ENCODE measurements at regions of chr21 and their contacts with region 1.

Region 1: DNA sequence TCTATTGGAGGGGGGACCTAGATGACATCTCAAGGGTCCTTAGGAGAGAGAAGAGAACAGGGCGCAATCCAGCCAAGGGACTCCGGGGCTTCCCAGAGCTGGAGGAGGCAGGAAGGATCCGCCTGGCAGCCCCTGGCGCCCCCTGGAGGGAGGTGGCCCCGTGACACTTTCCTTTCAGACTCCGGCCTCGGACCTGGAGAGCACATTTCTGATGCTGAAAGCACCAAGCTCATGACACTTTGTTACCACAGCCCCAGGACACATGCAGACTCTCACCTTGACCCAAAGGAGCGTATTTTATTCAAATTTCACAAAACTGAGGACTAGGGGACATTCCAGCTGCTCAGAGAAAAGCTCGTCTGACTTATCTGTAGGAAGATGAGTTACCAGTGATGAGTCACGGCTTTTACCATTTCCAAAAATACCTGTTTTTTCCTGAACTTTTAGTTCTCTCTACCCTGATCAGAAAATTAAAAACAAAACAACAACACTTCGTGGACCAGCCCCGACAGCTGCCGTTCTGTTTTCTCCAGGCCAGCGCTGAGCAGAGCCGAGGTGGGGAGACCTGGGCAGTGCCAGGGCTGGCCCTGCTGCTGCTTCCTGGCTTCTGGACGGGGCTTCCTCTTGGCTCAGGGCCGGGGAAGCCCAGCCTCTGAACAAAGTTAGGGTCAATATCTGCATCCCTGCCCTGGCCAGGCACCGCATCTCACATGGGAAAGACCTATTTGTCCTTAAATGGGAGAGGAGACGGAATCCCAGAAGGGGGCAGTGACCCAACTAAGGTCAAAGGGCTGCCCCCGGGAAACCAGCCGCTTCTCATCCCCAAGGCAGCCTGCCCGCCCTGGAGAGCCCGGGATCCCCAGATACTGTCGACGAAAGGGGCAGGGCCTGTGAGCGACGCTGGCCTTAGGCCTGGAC is 21.6 kb upstream of the POFUT2 start:
- DNase-seq: peak; percentile 78 to 89 (median 83)
- H3K4me3 ChIP-seq: no peak overlapping the region
- H3K27ac ChIP-seq: peak overlapping the region; percentile 7 to 84
- H3K4me1 ChIP-seq: peaks cover 39% of the 10 kb centered on the region
- H3K27me3 ChIP-seq: no peaks in the 10 kb centered on the region
- CTCF ChIP-seq: peak; percentile 14 to 82 (median 74)
- EP300 ChIP-seq: no peak
- POLR2A ChIP-seq: no peak

Region 2: GRCh38 chr21:43975495-43975993 is 1333.8 kb before region 1 on chr21:
- intact Hi-C with region 1: no loop called
- DNase-seq: peak; percentile 76 to 91 (median 86)
- H3K4me3 ChIP-seq: no peak overlapping the region
- H3K27ac ChIP-seq: no peak overlapping the region
- H3K4me1 ChIP-seq: peaks cover 9% of the 10 kb centered on the region
- H3K27me3 ChIP-seq: no peaks in the 10 kb centered on the region
- CTCF ChIP-seq: peak; percentile 72 to 85 (median 84)
- EP300 ChIP-seq: no peak
- POLR2A ChIP-seq: no peak

Region 3: DNA sequence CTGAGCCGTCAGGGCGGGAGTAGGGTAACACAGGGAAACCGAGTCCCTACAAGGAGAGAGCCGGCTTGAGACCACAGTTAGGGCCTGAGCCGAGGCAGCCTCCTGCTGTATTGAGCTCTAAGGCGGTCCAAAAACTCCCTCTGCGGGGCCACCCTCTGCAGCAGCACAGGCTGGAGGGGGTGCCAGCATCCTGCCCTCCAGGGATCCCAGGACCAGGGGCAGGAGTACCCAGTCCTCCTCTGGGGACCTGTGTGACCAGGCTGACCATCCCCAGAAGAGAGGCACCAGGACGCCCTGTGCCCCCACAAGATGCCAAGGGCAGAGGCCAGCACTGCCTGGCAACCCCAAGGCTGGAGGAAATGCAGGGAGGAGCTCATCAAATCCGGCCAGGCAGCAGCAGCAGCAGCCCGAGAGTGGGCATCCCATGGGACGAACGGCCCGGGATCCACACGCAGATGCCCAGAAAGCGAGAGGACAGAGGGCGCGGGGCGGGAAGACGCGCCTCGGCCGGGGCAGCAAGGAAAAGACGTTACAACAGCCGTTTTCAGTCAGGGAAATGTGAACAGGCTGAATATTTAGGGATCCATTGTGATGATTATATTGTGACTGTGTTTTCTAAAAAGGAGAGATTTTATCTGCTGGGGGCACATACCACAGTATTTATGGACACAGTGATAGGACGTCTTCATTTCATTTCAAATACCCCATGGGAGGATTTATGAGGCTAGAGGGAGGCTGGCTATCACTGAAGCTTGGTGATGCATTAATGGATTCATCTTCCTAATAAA is 38.6 kb after region 1 on chr21:
- intact Hi-C with region 1: loop called in 1 of 4 experiments (anchors 5 kb)
- DNase-seq: peak in 3 of 5 donors; percentile 45 to 65 (median 50)
- H3K4me3 ChIP-seq: no peak overlapping the region
- H3K27ac ChIP-seq: peak overlapping the region; percentile 76 to 79
- H3K4me1 ChIP-seq: peaks cover 24% of the 10 kb centered on the region
- H3K27me3 ChIP-seq: no peaks in the 10 kb centered on the region
- CTCF ChIP-seq: no peak
- EP300 ChIP-seq: no peak
- POLR2A ChIP-seq: no peak

Region 4: GRCh38 chr21:45427331-45428271 is 118.3 kb after region 1 on chr21:
- intact Hi-C with region 1: loop called in 2 of 4 experiments (anchors 5 kb)
- DNase-seq: peak; percentile 77 to 90 (median 87)
- H3K4me3 ChIP-seq: no peak overlapping the region
- H3K27ac ChIP-seq: peak overlapping the region; percentile 37 to 44
- H3K4me1 ChIP-seq: peaks cover 30% of the 10 kb centered on the region
- H3K27me3 ChIP-seq: no peaks in the 10 kb centered on the region
- CTCF ChIP-seq: no peak
- EP300 ChIP-seq: no peak
- POLR2A ChIP-seq: no peak

Region 5: GRCh38 chr21:45432575-45433255 is 123.4 kb after region 1 on chr21:
- intact Hi-C with region 1: loop called in 2 of 4 experiments (anchors 5 kb)
- DNase-seq: peak in 2 of 5 donors; percentile 69 to 70
- H3K4me3 ChIP-seq: no peak overlapping the region
- H3K27ac ChIP-seq: peak overlapping the region; percentile 79 to 91
- H3K4me1 ChIP-seq: peaks cover 40% of the 10 kb centered on the region
- H3K27me3 ChIP-seq: no peaks in the 10 kb centered on the region
- CTCF ChIP-seq: no peak
- EP300 ChIP-seq: no peak
- POLR2A ChIP-seq: no peak

Region 6: DNA sequence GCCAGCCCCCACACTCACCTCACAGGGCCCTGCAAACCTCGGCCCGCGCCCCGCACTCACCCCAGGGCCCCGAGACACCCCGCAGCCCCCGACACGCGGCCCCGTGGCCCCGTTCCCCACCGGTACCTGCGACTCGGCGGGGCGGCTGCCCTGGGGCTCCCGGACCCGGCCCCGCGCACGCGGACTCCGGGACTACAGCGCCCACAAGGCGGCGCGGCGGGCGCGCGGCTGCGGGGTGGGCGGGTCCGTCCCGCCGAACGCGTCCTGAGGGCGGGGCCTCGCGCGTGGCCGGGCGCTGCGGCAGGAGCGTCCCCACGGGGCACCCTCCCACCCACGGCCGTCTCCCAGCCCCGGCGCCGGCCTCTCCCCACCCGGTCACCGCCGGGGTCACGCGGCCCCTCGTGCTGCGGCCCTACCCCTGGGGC is 232.9 kb after region 1 on chr21 and contains the start of gene SLC19A1:
- intact Hi-C with region 1: no loop called
- DNase-seq: peak; percentile 54 to 83 (median 73)
- H3K4me3 ChIP-seq: peak within 1 kb of the TSS; percentile 66
- H3K27ac ChIP-seq: peak within 1 kb of the TSS in 1 of 2 donors; percentile 55
- H3K4me1 ChIP-seq: peaks cover 11% of the 10 kb centered on the region
- H3K27me3 ChIP-seq: no peaks in the 10 kb centered on the region
- CTCF ChIP-seq: peak in 2 of 3 donors; percentile 76 to 77
- EP300 ChIP-seq: no peak
- POLR2A ChIP-seq: no peak
- total RNA-seq, gene SLC19A1: 2.4 to 18.2 (median 10.1) TPM

Region 7: GRCh38 chr21:46122237-46122671 is 812.9 kb after region 1 on chr21:
- intact Hi-C with region 1: no loop called
- DNase-seq: peak in 4 of 5 donors; percentile 14 to 33 (median 19)
- H3K4me3 ChIP-seq: no peak overlapping the region
- H3K27ac ChIP-seq: peak overlapping the region in 1 of 2 donors; percentile 30
- H3K4me1 ChIP-seq: no peaks in the 10 kb centered on the region
- H3K27me3 ChIP-seq: no peaks in the 10 kb centered on the region
- CTCF ChIP-seq: no peak
- EP300 ChIP-seq: no peak
- POLR2A ChIP-seq: no peak